Activated naive CD4-positive, alpha-beta T cell treated with anti-CD3 and anti-CD28 coated beads for 36 hours (primary cell): ENCODE measurements at regions of chr15 and their contacts with region 1.

Region 1: DNA sequence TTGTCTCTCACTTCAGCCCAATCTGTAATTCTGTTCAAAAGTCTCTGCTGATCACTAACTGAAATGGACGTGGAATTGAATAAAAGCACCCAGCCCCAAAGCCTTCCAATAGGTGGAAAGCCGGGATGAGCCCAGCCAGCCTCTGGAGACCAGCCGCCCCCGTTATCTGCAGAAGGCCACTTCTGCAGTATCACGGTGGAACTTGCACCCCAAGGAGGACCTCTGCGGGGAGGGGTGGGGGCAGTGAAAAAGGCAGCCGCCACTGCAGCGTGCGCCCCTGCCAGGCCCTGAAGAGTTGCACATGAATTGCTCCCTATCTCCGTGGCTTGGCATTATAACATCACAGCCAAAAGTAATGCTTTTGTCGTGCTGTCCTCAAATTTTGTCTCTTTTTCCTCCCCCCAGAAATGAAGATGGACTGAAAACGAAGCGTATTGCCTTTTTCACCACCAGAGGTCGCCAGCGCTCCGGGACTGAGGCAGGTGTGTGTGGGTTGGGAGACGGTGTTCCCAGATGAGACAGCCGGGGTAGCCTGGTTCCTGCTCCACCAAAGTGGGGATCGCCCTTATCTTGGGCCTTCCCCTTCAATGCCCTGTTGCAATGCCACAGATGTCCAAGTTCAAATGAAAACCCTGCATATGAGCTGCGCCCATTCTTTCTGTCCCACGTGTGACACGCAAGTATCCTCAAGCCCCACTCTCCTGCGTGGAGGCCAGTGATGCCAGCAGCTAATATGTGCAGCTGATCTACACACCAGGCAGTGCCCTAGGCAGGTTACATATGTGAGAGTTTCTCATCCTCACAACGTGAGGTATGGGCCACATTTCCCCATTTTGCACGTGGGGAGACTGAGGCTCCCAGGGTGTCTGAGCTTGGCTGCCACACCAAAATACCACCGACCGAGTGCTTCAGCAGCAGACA is 96.0 kb downstream of the LRRK1 start:
- DNase-seq: peak; percentile 81
- H3K4me3 Mint-ChIP-seq: no peak overlapping the region
- H3K27ac Mint-ChIP-seq: no peak overlapping the region
- H3K4me1 Mint-ChIP-seq: no peaks in the 10 kb centered on the region
- H3K27me3 Mint-ChIP-seq: no peaks in the 10 kb centered on the region

Region 2: GRCh38 chr15:101088788-101089583 is 73.8 kb after region 1 on chr15:
- CTCF ChIA-PET with region 1: interaction called, 8 read pairs
- intact Hi-C with region 1: loop called (anchors 2 kb)
- DNase-seq: peak; percentile 83
- H3K4me3 Mint-ChIP-seq: no peak overlapping the region
- H3K27ac Mint-ChIP-seq: no peak overlapping the region
- H3K4me1 Mint-ChIP-seq: no peaks in the 10 kb centered on the region
- H3K27me3 Mint-ChIP-seq: no peaks in the 10 kb centered on the region

Region 3: DNA sequence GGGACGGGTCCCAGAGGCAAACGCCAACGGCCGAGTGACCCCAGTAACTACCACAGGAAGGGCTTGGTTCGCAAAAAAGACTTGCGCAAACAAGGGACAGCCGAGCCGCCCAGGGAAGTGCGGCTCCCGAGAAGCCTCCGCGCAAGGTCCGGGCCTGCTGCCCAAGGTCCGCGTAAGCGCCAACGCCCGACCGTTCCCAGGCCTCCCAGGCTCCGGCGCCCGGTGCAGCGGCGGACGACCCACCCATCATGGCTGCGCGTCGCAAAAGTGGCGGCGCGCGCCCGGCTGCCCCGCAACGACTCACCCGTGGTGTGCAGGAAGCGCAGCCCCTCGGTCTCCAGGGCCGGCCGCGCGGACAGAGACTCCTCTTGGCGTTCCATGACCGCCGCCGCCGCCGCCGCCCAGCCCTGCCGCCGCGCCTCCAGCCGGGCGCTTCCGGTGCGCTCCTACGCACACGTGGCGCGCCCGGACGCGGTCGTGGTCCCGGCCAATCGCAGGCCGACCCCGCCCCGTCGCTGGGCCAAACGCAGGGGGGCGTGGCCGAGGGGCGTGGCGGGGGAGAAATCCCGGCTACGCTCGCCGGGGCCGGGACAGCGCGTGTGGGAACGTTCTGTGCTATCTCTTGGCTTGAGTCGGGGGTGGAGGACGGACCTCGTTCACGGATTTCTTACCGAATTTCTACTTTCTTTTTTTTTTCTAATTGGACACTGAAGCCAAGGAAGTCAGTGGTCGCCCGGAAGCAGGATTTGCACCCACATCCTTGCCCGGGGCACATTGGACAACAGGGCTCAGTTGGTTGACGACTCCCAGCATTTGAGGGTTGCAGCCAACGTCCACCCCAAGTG is 262.1 kb after region 1 on chr15 and contains the start of gene SELENOS:
- CTCF ChIA-PET with region 1: interaction called, 3 read pairs
- intact Hi-C with region 1: loop called (anchors 5 kb)
- DNase-seq: peak; percentile 85
- H3K4me3 Mint-ChIP-seq: peak within 1 kb of the TSS; percentile 90
- H3K27ac Mint-ChIP-seq: peak within 1 kb of the TSS; percentile 54
- H3K4me1 Mint-ChIP-seq: peaks cover 21% of the 10 kb centered on the region
- H3K27me3 Mint-ChIP-seq: no peaks in the 10 kb centered on the region
- total RNA-seq, gene SELENOS: 13.1 to 15.3 TPM